ENCODE measurements at regions of chr15 and their contacts with region 1.

Region 1: DNA sequence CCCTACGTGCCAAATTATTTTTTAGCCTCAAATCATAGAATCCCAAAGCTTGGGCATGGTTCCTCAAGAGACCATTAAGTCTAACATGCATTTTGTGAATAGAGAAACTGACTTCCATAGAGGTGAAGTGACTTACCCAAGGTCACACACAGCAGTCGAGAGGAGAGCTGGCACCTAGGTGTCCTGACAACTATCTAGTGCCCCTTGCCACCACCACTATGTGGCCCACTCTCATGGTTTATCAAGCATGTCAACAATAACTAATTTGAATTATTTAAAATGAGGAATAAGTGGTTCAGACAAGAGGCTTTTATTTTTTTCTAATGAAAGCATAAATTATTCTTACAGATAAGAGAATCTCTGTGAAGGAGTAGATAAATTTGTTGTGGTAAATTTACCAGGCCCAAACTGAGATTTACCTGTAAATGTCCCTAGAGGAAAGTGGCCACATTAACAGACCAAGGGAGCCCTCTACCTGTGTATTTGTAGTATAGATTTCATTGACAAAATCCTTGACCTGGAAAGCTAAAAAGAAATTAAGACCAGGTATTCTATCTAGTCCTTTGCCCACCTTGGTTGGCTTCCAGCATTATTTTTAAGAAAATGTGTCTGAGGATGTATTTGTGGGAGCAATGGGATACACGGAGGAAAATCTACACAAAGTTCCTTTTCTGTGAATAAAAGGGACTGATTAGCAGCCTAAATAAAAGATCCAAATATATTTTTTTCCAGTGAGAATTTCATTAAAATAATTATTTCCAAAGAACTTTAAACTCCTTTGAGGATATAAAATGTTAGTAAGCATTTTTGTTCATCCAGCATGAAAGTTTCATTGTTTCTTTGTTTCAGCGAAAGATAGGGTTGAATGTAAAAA is 49.1 kb downstream of the IQCH start:
- DNase-seq: peak; percentile 17
- H3K4me3 ChIP-seq: no peak overlapping the region
- H3K27ac ChIP-seq: no peak overlapping the region
- H3K4me1 ChIP-seq: no peaks in the 10 kb centered on the region
- H3K27me3 ChIP-seq: no peaks in the 10 kb centered on the region
- CTCF ChIP-seq: peak; percentile 18 to 25 (median 18)
- POLR2A ChIP-seq: no peak

Region 2: DNA sequence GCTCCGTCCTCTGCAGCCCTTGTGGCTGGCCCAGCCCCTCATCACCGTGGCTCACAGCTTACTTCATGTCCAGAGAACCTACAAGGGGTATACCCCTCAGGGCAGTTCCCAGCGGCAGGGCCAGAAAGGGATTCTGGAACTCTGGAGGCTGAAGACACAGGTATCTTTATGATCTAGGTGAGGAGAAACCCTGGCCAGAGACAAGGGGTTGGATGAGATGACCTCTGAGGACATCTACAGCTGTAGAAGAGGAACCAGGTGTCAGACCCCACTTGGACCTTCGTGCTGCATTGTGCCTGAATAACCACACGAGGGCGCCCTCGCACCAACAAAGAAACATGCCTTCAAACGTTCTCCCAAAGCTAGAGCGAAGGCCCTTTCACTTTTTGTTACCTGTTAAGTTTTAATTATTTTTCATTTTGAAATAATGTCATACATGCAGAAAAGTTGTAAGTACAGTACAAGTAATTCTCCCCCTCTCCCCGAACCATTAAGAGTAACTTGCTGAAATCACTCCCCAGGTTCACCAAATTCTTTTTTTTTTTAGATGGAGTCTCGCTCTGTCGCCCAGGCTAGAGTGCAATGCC is 357.1 kb before region 1 on chr15:
- intact Hi-C with region 1: loop called (anchors 10 kb)
- DNase-seq: peak; percentile 81
- H3K4me3 ChIP-seq: no peak overlapping the region
- H3K27ac ChIP-seq: no peak overlapping the region
- H3K4me1 ChIP-seq: no peaks in the 10 kb centered on the region
- H3K27me3 ChIP-seq: no peaks in the 10 kb centered on the region
- CTCF ChIP-seq: peak; percentile 88 to 93 (median 90)
- POLR2A ChIP-seq: no peak

Region 3: GRCh38 chr15:67290319-67290718 is 13.4 kb before region 1 on chr15:
- intact Hi-C with region 1: no loop called
- DNase-seq: no peak
- H3K4me3 ChIP-seq: no peak overlapping the region
- H3K27ac ChIP-seq: no peak overlapping the region
- H3K4me1 ChIP-seq: no peaks in the 10 kb centered on the region
- H3K27me3 ChIP-seq: no peaks in the 10 kb centered on the region
- CTCF ChIP-seq: no peak
- POLR2A ChIP-seq: no peak